Mammary epithelial cell (primary cell): ENCODE measurements at regions of chr21 and their contacts with region 1.

Region 1: DNA sequence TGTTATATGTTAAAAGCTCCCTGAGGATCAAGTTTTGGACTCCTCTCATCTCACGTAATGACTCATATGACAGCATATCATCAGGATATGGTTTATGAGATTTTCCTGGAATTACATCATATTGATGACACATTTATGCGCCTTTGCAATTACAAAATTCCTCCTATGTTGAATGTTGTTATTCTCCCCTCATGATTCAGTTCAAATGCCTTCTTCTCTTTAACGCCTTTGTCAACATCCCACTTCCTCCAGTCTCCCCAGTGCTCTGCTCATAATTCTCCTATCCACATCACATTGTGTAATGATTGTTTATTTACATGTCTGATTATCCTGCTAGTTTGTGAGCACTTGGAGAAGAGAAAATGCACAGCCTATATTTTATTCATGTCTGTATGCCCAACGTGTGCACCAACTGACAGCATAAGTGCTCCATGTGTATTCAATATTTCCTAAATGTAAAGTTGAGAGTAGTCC is 80.9 kb upstream of the BACH1 start:
- DNase-seq: peak; percentile 94
- H3K4me3 ChIP-seq: no peak overlapping the region
- H3K27ac ChIP-seq: peak overlapping the region; percentile 32
- H3K4me1 ChIP-seq: peaks cover 14% of the 10 kb centered on the region
- H3K27me3 ChIP-seq: no peaks in the 10 kb centered on the region
- CTCF ChIP-seq: no peak

Region 2: DNA sequence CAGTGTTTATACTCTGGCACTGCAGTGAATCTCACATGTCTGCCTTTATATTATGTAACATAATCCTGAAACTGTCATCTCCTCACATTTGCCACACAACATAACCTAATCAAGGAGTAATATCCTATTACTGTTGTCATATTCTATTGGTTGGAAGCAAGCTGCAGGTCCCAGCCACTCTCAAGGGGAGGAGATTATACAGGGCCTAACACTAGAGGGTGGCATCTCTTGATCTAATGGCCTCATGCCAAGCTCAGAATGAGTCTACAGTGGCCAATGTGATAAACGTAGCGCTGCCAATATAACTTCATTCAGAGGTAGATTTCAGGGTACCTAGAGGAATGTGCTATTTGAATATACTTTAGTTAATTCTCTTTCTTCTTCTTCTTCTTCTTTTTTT is 247.7 kb after region 1 on chr21:
- CTCF ChIA-PET with region 1: interaction called, 11 read pairs
- dilution Hi-C with region 1: no loop called
- in situ Hi-C with region 1: no loop called
- intact Hi-C with region 1: no loop called
- DNase-seq: no peak
- H3K4me3 ChIP-seq: no peak overlapping the region
- H3K27ac ChIP-seq: no peak overlapping the region
- H3K4me1 ChIP-seq: no peaks in the 10 kb centered on the region
- H3K27me3 ChIP-seq: no peaks in the 10 kb centered on the region
- CTCF ChIP-seq: no peak